ENCODE measurements at regions of chr12 and their contacts with region 1.

Region 1: GRCh38 chr12:12786716-12787601 is 1.5 kb downstream of the APOLD1 start:
- DNase-seq: peak; percentile 75
- H3K4me3 Mint-ChIP-seq: peak overlapping the region; percentile 78
- H3K27ac Mint-ChIP-seq: no peak overlapping the region
- H3K4me1 Mint-ChIP-seq: peaks cover 43% of the 10 kb centered on the region
- H3K27me3 Mint-ChIP-seq: no peaks in the 10 kb centered on the region

Region 2: GRCh38 chr12:12704593-12705230 is 82.2 kb before region 1 on chr12:
- CTCF ChIA-PET with region 1: no interaction called
- POLR2A ChIA-PET with region 1: no interaction called
- DNase-seq: no peak
- H3K4me3 Mint-ChIP-seq: no peak overlapping the region
- H3K27ac Mint-ChIP-seq: no peak overlapping the region
- H3K4me1 Mint-ChIP-seq: peaks cover 27% of the 10 kb centered on the region
- H3K27me3 Mint-ChIP-seq: no peaks in the 10 kb centered on the region

Region 3: DNA sequence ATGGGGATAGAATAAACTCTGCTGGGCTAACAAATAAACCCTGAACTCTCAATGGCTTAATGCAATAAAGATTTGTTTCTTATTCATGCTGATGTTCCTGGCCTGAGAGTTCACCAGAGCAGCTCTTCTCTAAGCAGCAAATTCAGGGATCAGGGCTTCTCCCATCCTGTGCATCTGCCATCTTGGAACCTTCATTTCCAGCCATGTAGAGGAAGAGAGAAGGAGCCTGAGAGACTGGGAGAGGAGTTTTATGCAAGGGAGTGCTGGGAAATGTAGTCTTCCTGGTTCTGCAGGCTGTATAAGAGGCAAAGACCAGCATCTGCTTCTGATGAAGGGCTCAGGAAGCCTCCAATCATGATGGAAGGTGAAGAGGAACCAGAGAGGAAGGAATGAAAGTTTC is 22.1 kb before region 1 on chr12:
- CTCF ChIA-PET with region 1: no interaction called
- POLR2A ChIA-PET with region 1: no interaction called
- DNase-seq: no peak
- H3K4me3 Mint-ChIP-seq: no peak overlapping the region
- H3K27ac Mint-ChIP-seq: no peak overlapping the region
- H3K4me1 Mint-ChIP-seq: no peaks in the 10 kb centered on the region
- H3K27me3 Mint-ChIP-seq: no peaks in the 10 kb centered on the region

Region 4: GRCh38 chr12:12803186-12803585 is 16.2 kb after region 1 on chr12:
- CTCF ChIA-PET with region 1: interaction called, 23 read pairs
- POLR2A ChIA-PET with region 1: interaction called, 50 read pairs
- DNase-seq: peak; percentile 71
- H3K4me3 Mint-ChIP-seq: peak overlapping the region; percentile 37
- H3K27ac Mint-ChIP-seq: peak overlapping the region; percentile 79
- H3K4me1 Mint-ChIP-seq: peaks cover 54% of the 10 kb centered on the region
- H3K27me3 Mint-ChIP-seq: no peaks in the 10 kb centered on the region

Region 5: GRCh38 chr12:12813120-12814101 is 26.5 kb after region 1 on chr12 and contains the start of gene DDX47:
- CTCF ChIA-PET with region 1: interaction called, 57 read pairs
- POLR2A ChIA-PET with region 1: interaction called, 38 read pairs
- DNase-seq: peak; percentile 97
- H3K4me3 Mint-ChIP-seq: peak within 1 kb of the TSS; percentile 93
- H3K27ac Mint-ChIP-seq: peak within 1 kb of the TSS; percentile 85
- H3K4me1 Mint-ChIP-seq: peaks cover 77% of the 10 kb centered on the region
- H3K27me3 Mint-ChIP-seq: no peaks in the 10 kb centered on the region
- total RNA-seq, gene DDX47: 49.1 to 53.2 TPM

Region 6: GRCh38 chr12:12823292-12823691 is 36.3 kb after region 1 on chr12:
- CTCF ChIA-PET with region 1: interaction called, 11 read pairs
- POLR2A ChIA-PET with region 1: interaction called, 3 read pairs
- DNase-seq: no peak
- H3K4me3 Mint-ChIP-seq: no peak overlapping the region
- H3K27ac Mint-ChIP-seq: no peak overlapping the region
- H3K4me1 Mint-ChIP-seq: peaks cover 24% of the 10 kb centered on the region
- H3K27me3 Mint-ChIP-seq: no peaks in the 10 kb centered on the region

Region 7: DNA sequence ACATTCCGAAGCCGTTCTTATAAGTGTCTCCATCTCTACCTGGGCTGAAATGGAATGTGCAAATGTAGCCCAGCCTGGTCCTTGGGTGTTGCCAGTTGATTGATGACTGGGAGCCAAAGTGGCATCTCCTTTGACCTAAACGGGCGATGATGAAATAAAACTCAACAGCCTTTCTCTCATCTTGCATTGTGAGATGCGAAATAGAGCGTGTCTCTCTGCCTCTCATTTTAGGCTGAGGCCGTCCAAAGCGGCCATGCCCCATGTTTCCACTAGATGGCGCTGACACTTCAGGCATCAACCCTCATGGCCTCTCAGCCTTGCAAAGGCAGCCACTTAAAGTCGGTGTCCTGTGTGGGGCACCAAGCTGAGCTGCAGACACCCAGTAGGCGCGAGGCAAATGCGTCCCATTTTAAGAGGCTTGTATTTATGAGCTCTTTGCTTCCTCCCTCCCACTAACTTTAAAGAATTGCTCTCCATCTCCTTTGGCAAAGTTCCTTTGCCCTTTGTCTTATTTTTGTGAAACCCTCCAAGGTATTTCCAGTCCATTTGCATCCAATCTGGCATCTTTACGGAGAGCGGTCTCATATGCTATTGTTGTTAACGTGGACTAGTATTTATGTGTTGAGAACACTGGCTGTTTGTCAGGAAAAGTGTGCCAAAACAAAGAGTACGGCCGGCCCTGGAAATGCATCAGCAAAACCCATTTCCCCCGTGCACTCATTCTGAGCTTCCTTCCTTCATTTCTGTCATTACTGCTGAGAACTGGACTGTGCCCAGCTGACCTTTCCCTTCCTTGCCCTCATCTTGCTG is 129.4 kb after region 1 on chr12:
- CTCF ChIA-PET with region 1: interaction called, 12 read pairs
- POLR2A ChIA-PET with region 1: no interaction called
- DNase-seq: peak; percentile 89
- H3K4me3 Mint-ChIP-seq: no peak overlapping the region
- H3K27ac Mint-ChIP-seq: no peak overlapping the region
- H3K4me1 Mint-ChIP-seq: peaks cover 10% of the 10 kb centered on the region
- H3K27me3 Mint-ChIP-seq: peaks cover 18% of the 10 kb centered on the region

Measured in activated CD4-positive, alpha-beta memory T cell treated with anti-CD3 and anti-CD28 coated beads, Interleukin-2, amount 10 ng/mL, durations not matched to agents 7 days and 5 days (primary cell).